ENCODE measurements at regions of chr14 and their contacts with region 1.

Region 1: GRCh38 chr14:55482936-55483605 is 42.7 kb upstream of the TBPL2 start:
- DNase-seq: no peak
- ATAC-seq: no peak
- H3K4me3 ChIP-seq: no peak overlapping the region
- H3K27ac ChIP-seq: no peak overlapping the region
- H3K4me1 ChIP-seq: peaks cover 1% of the 10 kb centered on the region; the same call in 1 of the 2 replicates
- H3K27me3 ChIP-seq: no peaks in the 10 kb centered on the region
- CTCF ChIP-seq: no peak

Region 2: GRCh38 chr14:54267172-54267571 is 1215.9 kb before region 1 on chr14:
- CTCF ChIA-PET with region 1: no interaction called
- POLR2A ChIA-PET with region 1: no interaction called
- in situ Hi-C with region 1: no loop called
- intact Hi-C with region 1: no loop called
- DNase-seq: no peak
- ATAC-seq: no peak
- H3K4me3 ChIP-seq: no peak overlapping the region
- H3K27ac ChIP-seq: no peak overlapping the region
- H3K4me1 ChIP-seq: no peaks in the 10 kb centered on the region
- H3K27me3 ChIP-seq: no peaks in the 10 kb centered on the region
- CTCF ChIP-seq: no peak

Region 3: DNA sequence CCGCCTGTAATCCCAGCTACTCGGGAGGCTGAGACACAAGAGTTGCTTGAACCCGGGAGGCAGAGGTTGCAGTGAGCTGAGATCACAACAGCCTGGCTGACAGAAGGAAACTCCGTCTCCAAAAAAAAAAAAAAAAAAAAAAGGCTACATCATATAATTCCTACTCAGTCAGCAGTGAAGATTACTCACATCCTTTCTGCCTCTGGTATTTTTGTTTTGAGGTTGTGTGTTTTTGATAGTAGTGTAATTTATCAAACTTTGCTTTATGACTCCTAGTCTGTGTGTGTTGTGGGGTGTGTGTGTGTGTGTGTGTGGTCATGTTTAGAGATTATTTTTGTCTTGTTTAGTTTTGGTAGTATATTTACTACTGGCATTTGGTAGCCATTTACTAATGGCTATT is 261.9 kb before region 1 on chr14:
- CTCF ChIA-PET with region 1: no interaction called
- POLR2A ChIA-PET with region 1: no interaction called
- in situ Hi-C with region 1: no loop called
- intact Hi-C with region 1: no loop called
- DNase-seq: peak; percentile 18
- ATAC-seq: no peak
- H3K4me3 ChIP-seq: no peak overlapping the region
- H3K27ac ChIP-seq: no peak overlapping the region
- H3K4me1 ChIP-seq: no peaks in the 10 kb centered on the region
- H3K27me3 ChIP-seq: no peaks in the 10 kb centered on the region
- CTCF ChIP-seq: no peak

Region 4: DNA sequence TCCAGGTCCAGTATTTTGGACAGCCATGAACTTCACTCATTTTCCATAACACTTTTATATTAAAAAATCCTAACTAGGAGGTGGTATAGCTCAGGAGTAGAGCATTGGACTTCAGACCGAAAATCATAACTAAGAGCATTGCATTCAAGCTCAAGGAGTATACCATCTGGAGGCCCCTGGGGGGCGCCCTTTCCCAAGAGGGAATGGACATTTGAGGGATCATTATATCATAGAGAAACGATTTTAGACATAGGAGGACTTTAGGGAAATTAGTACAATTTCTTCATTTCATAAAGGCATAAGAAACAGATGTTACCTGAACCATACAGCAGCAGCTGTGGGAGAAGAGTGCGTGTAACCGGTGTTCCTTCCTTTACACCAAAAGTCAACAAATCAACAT is 66.2 kb before region 1 on chr14:
- CTCF ChIA-PET with region 1: no interaction called
- POLR2A ChIA-PET with region 1: no interaction called
- in situ Hi-C with region 1: no loop called
- intact Hi-C with region 1: no loop called
- DNase-seq: no peak
- ATAC-seq: no peak
- H3K4me3 ChIP-seq: no peak overlapping the region
- H3K27ac ChIP-seq: no peak overlapping the region
- H3K4me1 ChIP-seq: peaks cover 9% of the 10 kb centered on the region
- H3K27me3 ChIP-seq: peaks cover 3% of the 10 kb centered on the region; the same call in 1 of the 2 replicates
- CTCF ChIP-seq: peak; percentile 66

Region 5: DNA sequence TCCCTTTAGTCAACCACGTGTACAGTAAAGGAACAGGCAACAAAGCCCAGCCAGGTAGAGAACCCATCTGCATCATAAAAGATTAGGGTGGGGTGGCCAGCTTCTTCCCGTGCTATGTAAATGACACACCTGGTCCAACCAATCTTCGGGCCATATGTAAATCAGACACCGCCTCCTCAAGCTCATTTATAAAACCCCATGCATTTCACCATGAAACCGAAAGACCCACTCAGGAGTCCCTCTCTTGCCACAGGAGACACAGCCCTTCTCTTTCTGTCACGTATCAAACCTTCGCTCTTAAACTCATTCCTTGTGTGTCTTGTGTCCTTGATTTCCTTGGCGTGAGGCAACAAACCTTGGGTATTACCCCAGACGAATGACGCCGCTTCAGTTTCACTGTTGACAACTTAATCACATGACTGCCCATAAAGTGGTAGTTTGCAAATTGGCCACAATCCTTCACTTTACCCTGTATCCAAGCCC is 17.2 kb after region 1 on chr14:
- CTCF ChIA-PET with region 1: no interaction called
- POLR2A ChIA-PET with region 1: interaction called, 13 read pairs
- in situ Hi-C with region 1: no loop called
- intact Hi-C with region 1: no loop called
- DNase-seq: no peak
- ATAC-seq: no peak
- H3K4me3 ChIP-seq: no peak overlapping the region
- H3K27ac ChIP-seq: peak overlapping the region; percentile 25; the same call in 1 of the 2 replicates
- H3K4me1 ChIP-seq: no peaks in the 10 kb centered on the region
- H3K27me3 ChIP-seq: no peaks in the 10 kb centered on the region
- CTCF ChIP-seq: no peak

Region 6: GRCh38 chr14:55707365-55707804 is 224.3 kb after region 1 on chr14:
- CTCF ChIA-PET with region 1: no interaction called
- POLR2A ChIA-PET with region 1: no interaction called
- in situ Hi-C with region 1: no loop called
- intact Hi-C with region 1: no loop called
- DNase-seq: no peak
- ATAC-seq: no peak
- H3K4me3 ChIP-seq: no peak overlapping the region
- H3K27ac ChIP-seq: no peak overlapping the region
- H3K4me1 ChIP-seq: no peaks in the 10 kb centered on the region
- H3K27me3 ChIP-seq: no peaks in the 10 kb centered on the region
- CTCF ChIP-seq: peak; percentile 52

Measured in Panc1 (cell line).